ENCODE measurements at regions of chr15 and their contacts with region 1.

Region 1: GRCh38 chr15:99733268-99734039 is at the start of gene LYSMD4:
- DNase-seq: peak; percentile 96 to 100 (median 99)

Region 2: GRCh38 chr15:99250494-99251435 is 482.7 kb before region 1 on chr15:
- intact Hi-C with region 1: loop called (anchors 10 kb)
- DNase-seq: peak; percentile 95 to 100 (median 98)

Region 3: DNA sequence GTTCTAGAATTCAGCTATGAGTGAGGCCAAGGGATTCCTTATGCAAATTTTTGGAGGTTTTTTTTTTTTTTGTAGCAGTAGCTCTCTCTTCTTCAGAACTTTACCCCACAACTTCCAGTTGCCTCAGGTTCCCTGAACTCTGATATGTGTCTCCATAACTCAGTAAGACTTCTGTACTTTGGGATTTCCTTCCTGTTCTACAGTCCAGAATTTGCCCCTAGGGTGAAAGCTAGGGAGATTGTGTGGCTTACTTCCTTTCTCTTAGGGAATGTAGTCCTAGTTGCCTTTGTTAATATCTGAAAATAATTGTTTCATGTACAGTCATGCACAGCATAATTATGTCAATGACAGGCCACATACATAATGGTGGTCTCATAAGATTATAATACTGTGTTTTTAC is 451.3 kb before region 1 on chr15:
- intact Hi-C with region 1: loop called (anchors 10 kb)
- DNase-seq: no peak

Region 4: DNA sequence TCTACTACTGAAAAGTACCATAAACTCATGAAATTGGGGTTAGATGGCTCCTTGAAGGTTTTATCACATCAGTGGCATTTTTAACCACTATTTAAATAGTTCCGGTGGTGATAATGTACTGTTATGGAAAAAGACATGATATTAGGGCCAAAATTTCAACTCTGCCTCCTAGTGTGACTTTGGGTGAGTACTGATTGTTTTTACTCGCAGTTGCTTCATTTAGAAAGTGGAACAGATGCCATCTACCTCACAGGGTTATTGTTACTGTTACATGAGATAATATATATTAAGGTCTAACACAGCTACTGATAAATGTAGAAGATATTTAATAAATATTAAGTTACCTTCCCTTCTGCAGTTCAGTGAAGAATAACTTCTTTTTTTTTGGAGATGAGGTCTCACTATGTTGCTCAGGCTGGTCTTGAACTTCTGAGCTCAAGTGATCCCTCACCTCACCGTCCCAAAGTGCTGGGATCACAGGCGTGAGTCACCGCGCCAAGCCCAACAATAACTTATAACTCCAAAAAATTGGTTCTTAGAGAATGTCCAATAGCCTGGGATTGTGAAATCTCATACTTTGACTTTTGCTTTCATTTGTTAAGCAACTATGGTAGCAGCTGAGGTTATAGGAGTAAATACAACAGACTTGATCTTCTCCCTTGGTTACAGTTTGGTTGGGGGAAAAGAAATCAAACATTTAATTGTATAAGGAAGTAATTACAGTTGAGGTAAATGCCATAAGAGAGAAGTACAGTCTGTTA is 119.4 kb before region 1 on chr15:
- intact Hi-C with region 1: no loop called
- DNase-seq: no peak

Measured in head of caudate nucleus (tissue), 42 donors.